Dorsolateral prefrontal cortex (tissue), 120 donors: ENCODE measurements at regions of chr4 and their contacts with region 1.

Region 1: DNA sequence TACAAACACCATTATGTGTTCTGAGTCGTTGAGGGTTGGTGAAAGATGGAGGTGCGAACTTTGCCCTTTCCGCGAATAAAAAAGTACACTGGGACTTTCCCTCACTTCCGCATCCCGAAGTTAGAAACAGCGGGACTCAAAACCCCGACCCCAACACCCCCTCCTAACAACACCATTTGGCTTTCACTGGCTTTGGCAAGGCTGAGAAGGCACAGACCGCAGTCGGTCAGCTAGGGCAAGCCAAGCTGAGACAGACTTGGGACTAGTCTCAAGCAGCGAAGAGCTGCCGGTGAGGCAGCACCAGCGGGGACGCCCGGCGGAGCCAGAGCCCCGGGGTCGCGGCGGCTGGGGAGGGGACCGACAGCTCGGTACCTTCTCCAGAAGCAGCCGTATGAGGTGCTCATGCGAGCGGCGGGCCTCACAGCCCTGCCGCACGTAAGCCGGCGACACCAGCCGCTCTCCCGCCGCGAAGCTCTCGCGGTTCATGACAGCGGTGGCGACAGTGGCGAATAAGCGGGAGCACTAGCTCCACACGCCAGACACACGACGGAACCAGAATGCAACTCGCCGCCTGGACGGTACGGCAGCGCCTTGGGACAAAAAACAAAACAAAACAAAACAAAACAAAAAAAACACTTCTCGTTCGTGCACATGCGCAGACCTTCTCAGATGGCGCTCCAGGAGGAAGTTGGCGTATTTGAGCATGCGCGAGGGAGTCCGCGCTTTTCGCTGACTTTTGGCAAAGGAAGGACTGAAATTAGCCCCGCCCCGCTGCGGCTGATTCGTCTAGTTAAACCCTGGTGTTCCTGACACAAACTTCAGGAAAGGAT is at the start of gene SEPSECS:
- DNase-seq: peak; percentile 89 to 96 (median 94)
- H3K4me3 ChIP-seq: peak within 1 kb of the TSS; percentile 73 to 99 (median 94)
- H3K27ac ChIP-seq: peak within 1 kb of the TSS; percentile 76 to 98 (median 93)
- H3K27me3 ChIP-seq: no peaks in the 10 kb centered on the region
- CTCF ChIP-seq: peak in 41 of 56 donors; percentile 7 to 61 (median 35)
- total RNA-seq, gene SEPSECS: 3.9 to 15.5 (median 8.4) TPM

Region 2: GRCh38 chr4:24999392-25000089 is 160.6 kb before region 1 on chr4:
- intact Hi-C with region 1: no loop called
- DNase-seq: no peak
- H3K4me3 ChIP-seq: no peak overlapping the region
- H3K27ac ChIP-seq: no peak overlapping the region
- H3K27me3 ChIP-seq: no peaks in the 10 kb centered on the region
- CTCF ChIP-seq: no peak

Region 3: DNA sequence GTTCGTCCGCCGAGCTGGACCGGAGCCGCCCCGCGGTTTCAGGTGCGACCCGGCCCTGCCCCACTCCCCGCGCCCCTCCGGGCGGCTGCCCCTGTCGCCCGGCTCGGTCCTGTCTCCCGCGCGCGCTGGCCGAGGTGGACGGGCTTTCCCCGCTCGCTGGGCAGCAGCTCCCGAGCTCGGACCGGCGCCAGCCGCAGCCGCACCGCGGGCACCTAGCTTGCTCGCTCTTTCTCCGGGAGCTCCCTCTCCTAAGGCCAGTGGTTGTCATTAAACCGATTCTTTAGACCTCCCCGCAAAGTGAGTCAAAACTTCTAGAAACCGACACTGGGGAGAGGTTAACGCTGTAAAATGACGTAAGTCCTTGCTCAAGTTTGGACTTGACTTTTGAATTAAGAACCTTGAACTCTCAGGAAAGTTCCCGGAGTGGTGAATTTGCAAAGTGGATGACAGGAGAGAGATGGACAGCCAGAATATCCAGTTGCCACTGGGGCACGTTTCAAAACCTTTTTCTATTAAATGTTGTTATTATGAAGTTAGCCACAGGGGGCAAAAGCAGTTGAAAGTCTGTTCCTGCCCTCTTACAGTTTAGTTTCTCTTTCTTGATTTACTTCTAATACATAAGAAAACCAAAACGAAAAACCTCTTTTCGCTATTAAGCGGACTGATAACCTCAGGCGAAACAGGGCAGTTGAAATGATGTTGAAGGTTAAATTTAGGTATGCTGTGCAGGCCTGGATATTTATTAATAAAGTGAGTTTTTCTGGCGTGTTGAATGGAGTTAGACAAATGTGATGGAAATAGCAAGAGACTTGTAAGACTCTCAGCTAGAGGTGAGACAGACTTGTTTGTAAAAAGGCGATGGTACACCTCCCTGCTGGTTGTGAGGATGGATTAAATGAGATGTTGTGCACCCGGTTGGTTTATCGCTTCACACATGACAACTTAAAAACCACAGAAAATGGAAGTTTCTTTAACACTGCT is 74.6 kb after region 1 on chr4:
- intact Hi-C with region 1: loop called (anchors 2 kb)
- DNase-seq: peak in 5 of 10 donors; percentile 10 to 67 (median 40)
- H3K4me3 ChIP-seq: peak overlapping the region; percentile 54 to 98 (median 92)
- H3K27ac ChIP-seq: peak overlapping the region; percentile 23 to 94 (median 86)
- H3K27me3 ChIP-seq: no peaks in the 10 kb centered on the region
- CTCF ChIP-seq: peak in 52 of 56 donors; percentile 16 to 64 (median 44)

Region 4: DNA sequence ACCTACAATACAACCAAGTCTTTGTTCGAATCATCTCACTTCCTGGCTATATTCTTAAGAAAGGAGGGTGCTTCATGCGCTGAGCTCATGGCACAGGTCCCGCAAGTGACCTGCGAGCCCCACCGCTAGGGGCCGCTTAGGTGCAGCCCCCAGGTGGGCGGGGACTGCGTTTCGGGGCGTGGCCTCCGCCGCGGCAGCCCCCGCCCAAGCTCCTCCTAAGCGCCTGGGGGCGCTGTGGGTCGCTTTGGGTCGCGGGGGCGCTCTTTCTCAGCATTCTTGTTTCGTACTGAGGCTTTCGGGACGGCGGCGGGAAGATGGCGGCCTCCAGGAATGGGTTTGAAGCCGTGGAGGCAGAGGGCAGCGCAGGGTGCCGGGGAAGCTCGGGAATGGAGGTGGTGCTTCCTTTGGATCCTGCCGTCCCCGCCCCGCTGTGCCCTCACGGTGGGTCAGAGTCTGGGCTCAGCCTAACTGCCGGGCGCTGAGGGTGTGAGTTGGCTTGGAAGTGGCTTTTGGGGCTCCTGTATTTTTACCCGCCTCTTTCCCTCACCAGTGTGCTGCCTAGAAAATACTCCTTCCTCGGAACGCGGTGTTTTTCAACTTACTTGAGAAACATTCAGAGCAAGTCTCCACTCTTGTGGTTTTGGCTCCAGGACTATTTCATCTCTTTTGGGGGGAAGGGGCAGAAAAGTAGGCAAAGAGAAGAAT is 152.5 kb after region 1 on chr4 and contains the start of gene ZCCHC4:
- intact Hi-C with region 1: loop called (anchors 1 kb)
- DNase-seq: peak; percentile 84 to 93 (median 89)
- H3K4me3 ChIP-seq: peak within 1 kb of the TSS; percentile 49 to 93 (median 78)
- H3K27ac ChIP-seq: peak within 1 kb of the TSS in 44 of 59 donors; percentile 5 to 85 (median 61)
- H3K27me3 ChIP-seq: no peaks in the 10 kb centered on the region
- CTCF ChIP-seq: peak; percentile 96 to 100 (median 100)
- total RNA-seq, gene ZCCHC4: 5.8 to 15.6 (median 10.8) TPM

Region 5: GRCh38 chr4:25842229-25842845 is 682.2 kb after region 1 on chr4:
- intact Hi-C with region 1: no loop called
- DNase-seq: no peak
- H3K4me3 ChIP-seq: no peak overlapping the region
- H3K27ac ChIP-seq: no peak overlapping the region
- H3K27me3 ChIP-seq: no peaks in the 10 kb centered on the region
- CTCF ChIP-seq: no peak